ENCODE measurements at regions of chr22 and their contacts with region 1.

Region 1: DNA sequence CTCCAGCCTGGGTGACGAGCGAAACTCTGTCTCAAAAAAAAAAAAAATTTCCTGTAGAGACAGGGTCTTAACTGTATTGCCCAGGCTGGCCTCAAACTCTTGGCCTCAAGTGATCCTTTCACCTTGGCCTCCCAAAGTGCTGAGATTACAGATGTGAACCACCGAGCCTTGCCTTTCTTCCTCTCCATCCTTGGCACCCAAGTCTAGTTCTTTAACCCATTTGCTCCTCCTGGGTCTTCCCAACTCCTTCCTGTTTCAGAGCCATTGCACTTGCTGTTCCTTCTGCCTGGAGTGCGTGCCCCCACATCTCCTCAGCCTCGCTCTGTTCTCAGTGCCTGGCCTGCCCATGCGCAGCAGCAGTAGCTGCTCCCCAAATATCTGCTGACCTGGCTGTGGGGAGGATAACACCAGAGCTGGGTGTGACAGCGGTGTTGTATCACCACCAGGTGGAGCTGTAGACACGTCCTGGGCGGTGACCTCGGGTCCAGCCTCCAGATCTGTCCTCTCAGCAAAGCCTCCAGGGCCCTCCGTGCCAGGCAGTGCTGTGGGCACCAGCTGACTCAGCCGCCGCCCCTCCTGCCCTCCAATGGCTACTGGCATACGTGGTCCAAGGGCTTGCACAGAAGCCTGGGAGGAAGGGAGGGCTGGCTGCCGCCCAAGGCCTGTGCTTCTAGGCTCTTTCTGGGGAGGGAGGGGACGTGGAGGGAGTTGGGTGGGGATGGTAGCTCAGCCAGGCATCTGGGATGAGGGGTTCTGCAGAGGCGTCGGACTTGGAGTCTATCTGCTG is 22.0 kb downstream of the TEF start:
- DNase-seq: peak; percentile 91
- H3K4me3 Mint-ChIP-seq: no peak overlapping the region
- H3K27ac Mint-ChIP-seq: peak overlapping the region; percentile 78
- H3K4me1 Mint-ChIP-seq: peaks cover 10% of the 10 kb centered on the region
- H3K27me3 Mint-ChIP-seq: no peaks in the 10 kb centered on the region

Region 2: GRCh38 chr22:41381329-41382097 is 22.2 kb before region 1 on chr22 and contains the start of gene TEF:
- CTCF ChIA-PET with region 1: interaction called, 15 read pairs
- POLR2A ChIA-PET with region 1: no interaction called
- DNase-seq: peak; percentile 98
- H3K4me3 Mint-ChIP-seq: peak within 1 kb of the TSS; percentile 90
- H3K27ac Mint-ChIP-seq: peak within 1 kb of the TSS; percentile 99
- H3K4me1 Mint-ChIP-seq: peaks cover 20% of the 10 kb centered on the region
- H3K27me3 Mint-ChIP-seq: no peaks in the 10 kb centered on the region
- total RNA-seq, gene TEF: 3.4 to 4.7 TPM

Region 3: GRCh38 chr22:41501209-41501608 is 97.5 kb after region 1 on chr22:
- CTCF ChIA-PET with region 1: interaction called, 11 read pairs
- POLR2A ChIA-PET with region 1: no interaction called
- DNase-seq: peak; percentile 37
- H3K4me3 Mint-ChIP-seq: no peak overlapping the region
- H3K27ac Mint-ChIP-seq: no peak overlapping the region
- H3K4me1 Mint-ChIP-seq: no peaks in the 10 kb centered on the region
- H3K27me3 Mint-ChIP-seq: no peaks in the 10 kb centered on the region

Region 4: DNA sequence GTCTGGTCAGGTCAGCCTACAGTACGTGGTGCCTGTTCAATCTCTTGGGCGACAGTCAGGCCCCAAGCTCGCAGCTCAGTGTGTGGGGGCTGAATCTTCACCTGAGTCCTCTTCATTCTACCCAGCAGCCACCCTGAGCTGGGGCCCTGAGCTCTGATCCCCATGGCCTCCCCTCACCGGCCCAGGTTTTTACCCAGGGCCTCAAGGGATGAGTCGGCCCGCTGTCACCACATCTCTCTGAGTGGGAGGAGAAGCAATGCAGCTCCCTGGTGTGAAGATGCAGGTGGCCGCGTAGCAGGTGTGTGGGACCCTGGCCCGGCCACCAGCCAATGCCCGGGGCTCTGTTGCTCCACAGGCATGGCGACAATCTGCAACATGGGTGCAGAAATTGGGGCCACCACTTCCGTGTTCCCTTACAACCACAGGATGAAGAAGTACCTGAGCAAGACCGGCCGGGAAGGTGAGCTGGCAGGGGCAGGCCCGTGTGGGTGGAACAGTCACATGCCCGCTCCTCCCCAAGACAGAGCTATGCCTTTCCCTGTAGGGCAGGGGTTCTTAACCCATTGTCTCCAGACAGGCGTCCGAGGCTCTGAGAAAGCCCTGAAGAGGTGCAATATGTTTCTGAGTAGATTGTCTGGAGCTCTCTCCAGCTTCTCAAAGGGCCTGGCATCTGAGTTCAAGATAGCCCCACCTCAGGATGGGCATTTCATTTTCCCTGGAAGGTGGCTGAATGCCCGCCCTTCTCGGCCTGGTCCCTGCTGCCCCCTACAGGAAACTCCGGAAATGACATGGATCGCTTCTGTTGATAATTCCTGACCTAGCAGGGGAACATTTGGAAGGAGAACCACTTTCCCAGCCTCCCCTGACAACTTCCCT is 113.7 kb after region 1 on chr22:
- CTCF ChIA-PET with region 1: interaction called, 40 read pairs
- POLR2A ChIA-PET with region 1: no interaction called
- DNase-seq: peak; percentile 29
- H3K4me3 Mint-ChIP-seq: no peak overlapping the region
- H3K27ac Mint-ChIP-seq: no peak overlapping the region
- H3K4me1 Mint-ChIP-seq: no peaks in the 10 kb centered on the region
- H3K27me3 Mint-ChIP-seq: no peaks in the 10 kb centered on the region

Region 5: GRCh38 chr22:41526837-41527799 is 123.4 kb after region 1 on chr22:
- CTCF ChIA-PET with region 1: interaction called, 37 read pairs
- POLR2A ChIA-PET with region 1: no interaction called
- DNase-seq: peak; percentile 67
- H3K4me3 Mint-ChIP-seq: no peak overlapping the region
- H3K27ac Mint-ChIP-seq: peak overlapping the region; percentile 62
- H3K4me1 Mint-ChIP-seq: peaks cover 13% of the 10 kb centered on the region
- H3K27me3 Mint-ChIP-seq: no peaks in the 10 kb centered on the region

Region 6: DNA sequence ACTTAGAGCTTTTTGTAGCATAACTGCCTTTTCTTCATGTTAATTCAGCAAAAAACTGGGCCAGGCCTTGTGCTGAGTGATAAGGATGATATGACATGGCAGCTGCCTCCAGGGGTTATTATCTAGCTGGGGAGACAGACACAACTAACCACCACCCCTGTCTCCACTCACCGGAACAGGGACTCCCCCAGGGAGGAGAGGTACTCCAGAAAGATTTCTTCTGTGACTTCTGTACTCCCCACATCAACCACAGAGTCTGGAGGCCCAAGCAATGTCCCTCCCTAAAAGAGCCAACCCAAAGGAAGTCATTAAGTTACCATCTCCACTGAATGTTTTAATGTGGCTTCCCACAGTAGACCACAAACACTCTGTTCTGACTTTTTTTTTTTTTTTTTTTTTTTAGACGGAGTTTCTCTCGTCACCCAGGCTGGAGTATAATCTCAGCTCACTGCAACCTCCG is 200.2 kb after region 1 on chr22:
- CTCF ChIA-PET with region 1: no interaction called
- POLR2A ChIA-PET with region 1: no interaction called
- DNase-seq: peak; percentile 80
- H3K4me3 Mint-ChIP-seq: peak overlapping the region; percentile 38
- H3K27ac Mint-ChIP-seq: peak overlapping the region; percentile 65
- H3K4me1 Mint-ChIP-seq: peaks cover 34% of the 10 kb centered on the region
- H3K27me3 Mint-ChIP-seq: no peaks in the 10 kb centered on the region